ENCODE measurements at regions of chr1 and their contacts with region 1.

Region 1: DNA sequence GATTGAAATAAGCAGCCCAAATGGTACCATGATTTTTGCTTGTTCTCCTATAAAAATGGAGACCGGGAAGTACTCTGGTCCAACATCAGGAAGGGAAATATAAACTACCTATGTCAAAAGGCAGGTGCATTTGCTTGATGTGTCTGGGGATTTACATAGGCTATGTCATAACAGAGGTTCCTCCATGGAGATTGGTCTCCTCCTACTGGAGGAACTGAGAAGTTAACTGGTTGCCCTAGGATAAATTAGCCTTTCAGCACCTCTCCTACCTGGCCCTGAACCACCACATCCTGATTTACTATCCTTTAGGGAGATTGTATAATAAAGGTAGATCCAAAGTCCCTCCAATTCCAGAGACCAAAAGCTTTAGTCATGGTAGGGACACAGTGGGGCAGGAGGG is 1109.3 kb upstream of the B3GALT2 start:
- DNase-seq: peak; percentile 47
- H3K4me3 Mint-ChIP-seq: no peak overlapping the region
- H3K27ac Mint-ChIP-seq: no peak overlapping the region
- H3K4me1 Mint-ChIP-seq: peaks cover 47% of the 10 kb centered on the region
- H3K27me3 Mint-ChIP-seq: no peaks in the 10 kb centered on the region

Region 2: GRCh38 chr1:192477630-192478029 is 1818.1 kb before region 1 on chr1:
- CTCF ChIA-PET with region 1: no interaction called
- intact Hi-C with region 1: loop called (anchors 2 kb)
- DNase-seq: no peak
- H3K4me3 Mint-ChIP-seq: no peak overlapping the region
- H3K27ac Mint-ChIP-seq: no peak overlapping the region
- H3K4me1 Mint-ChIP-seq: no peaks in the 10 kb centered on the region
- H3K27me3 Mint-ChIP-seq: no peaks in the 10 kb centered on the region

Region 3: GRCh38 chr1:193121616-193122593 is 1173.8 kb before region 1 on chr1 and contains the start of gene CDC73:
- CTCF ChIA-PET with region 1: no interaction called
- intact Hi-C with region 1: loop called (anchors 5 kb)
- DNase-seq: peak; percentile 97
- H3K4me3 Mint-ChIP-seq: peak within 1 kb of the TSS; percentile 92
- H3K27ac Mint-ChIP-seq: peak within 1 kb of the TSS; percentile 92
- H3K4me1 Mint-ChIP-seq: peaks cover 43% of the 10 kb centered on the region
- H3K27me3 Mint-ChIP-seq: peaks cover 1% of the 10 kb centered on the region
- total RNA-seq, gene CDC73: 39.0 to 45.2 TPM

Region 4: DNA sequence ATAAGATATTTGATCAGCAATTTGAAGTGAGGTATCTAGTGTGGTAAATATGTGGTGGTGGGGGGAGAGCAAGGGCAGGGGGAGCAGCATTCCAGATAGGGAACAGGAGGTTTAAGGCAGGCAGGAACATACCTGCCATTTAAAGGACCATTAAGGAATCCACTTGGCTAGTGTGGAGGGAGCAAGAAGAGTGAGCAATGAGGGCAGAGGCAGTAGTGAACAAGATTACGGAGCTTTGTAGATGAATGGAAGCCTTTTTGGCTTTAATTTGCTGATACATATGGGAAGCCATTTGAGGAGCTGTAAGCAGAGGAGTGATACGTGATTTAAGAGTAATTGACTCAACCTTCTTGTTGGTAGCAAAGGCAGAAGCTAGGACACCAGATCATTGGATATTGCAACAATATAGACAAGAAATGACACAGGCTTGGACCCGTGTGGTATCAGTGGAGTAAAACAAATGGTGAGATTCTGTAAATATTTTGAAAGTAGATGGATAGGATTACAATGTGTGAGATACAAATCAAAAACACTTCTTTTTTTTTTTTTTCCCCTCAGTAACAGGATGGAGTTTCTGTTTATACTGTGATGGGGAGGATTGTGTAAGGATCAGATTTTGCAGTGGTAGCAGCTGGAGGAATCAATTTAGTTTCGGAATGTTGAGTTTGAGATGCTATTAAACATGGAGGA is 1035.5 kb before region 1 on chr1:
- CTCF ChIA-PET with region 1: no interaction called
- intact Hi-C with region 1: loop called (anchors 2 kb)
- DNase-seq: no peak
- H3K4me3 Mint-ChIP-seq: no peak overlapping the region
- H3K27ac Mint-ChIP-seq: no peak overlapping the region
- H3K4me1 Mint-ChIP-seq: peaks cover 7% of the 10 kb centered on the region
- H3K27me3 Mint-ChIP-seq: no peaks in the 10 kb centered on the region

Region 5: GRCh38 chr1:193609592-193609991 is 686.1 kb before region 1 on chr1:
- CTCF ChIA-PET with region 1: no interaction called
- intact Hi-C with region 1: loop called (anchors 5 kb)
- DNase-seq: no peak
- H3K4me3 Mint-ChIP-seq: no peak overlapping the region
- H3K27ac Mint-ChIP-seq: no peak overlapping the region
- H3K4me1 Mint-ChIP-seq: peaks cover 8% of the 10 kb centered on the region
- H3K27me3 Mint-ChIP-seq: no peaks in the 10 kb centered on the region

Region 6: GRCh38 chr1:194102606-194103005 is 193.1 kb before region 1 on chr1:
- CTCF ChIA-PET with region 1: interaction called, 3 read pairs
- intact Hi-C with region 1: loop called (anchors 1 kb)
- DNase-seq: peak; percentile 24
- H3K4me3 Mint-ChIP-seq: no peak overlapping the region
- H3K27ac Mint-ChIP-seq: no peak overlapping the region
- H3K4me1 Mint-ChIP-seq: peaks cover 3% of the 10 kb centered on the region
- H3K27me3 Mint-ChIP-seq: no peaks in the 10 kb centered on the region

Region 7: GRCh38 chr1:194318790-194319280 is 23.1 kb after region 1 on chr1:
- CTCF ChIA-PET with region 1: no interaction called
- intact Hi-C with region 1: no loop called
- DNase-seq: no peak
- H3K4me3 Mint-ChIP-seq: no peak overlapping the region
- H3K27ac Mint-ChIP-seq: no peak overlapping the region
- H3K4me1 Mint-ChIP-seq: no peaks in the 10 kb centered on the region
- H3K27me3 Mint-ChIP-seq: no peaks in the 10 kb centered on the region

Region 8: DNA sequence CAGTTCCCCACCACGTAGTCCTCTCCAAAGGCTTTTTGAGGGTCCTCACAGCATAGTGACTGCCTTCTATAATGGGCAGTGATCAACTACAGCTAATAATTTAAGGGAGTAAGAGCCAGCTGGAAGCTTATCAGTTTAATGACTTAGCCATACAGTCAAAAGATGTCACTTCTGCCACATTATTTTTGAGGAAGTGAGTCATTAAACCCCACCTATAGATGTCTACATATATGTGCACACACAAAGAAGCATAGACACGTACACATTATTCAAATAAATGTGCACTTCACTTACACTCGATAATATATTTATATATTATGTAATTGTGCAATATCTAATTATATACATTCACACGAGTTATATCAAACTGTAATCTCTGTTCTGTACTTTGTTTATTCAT is 607.8 kb after region 1 on chr1:
- CTCF ChIA-PET with region 1: no interaction called
- intact Hi-C with region 1: no loop called
- DNase-seq: no peak
- H3K4me3 Mint-ChIP-seq: no peak overlapping the region
- H3K27ac Mint-ChIP-seq: no peak overlapping the region
- H3K4me1 Mint-ChIP-seq: no peaks in the 10 kb centered on the region
- H3K27me3 Mint-ChIP-seq: no peaks in the 10 kb centered on the region

Measured in activated naive CD4-positive, alpha-beta T cell treated with anti-CD3 and anti-CD28 coated beads for 36 hours (primary cell).